B cell (primary cell): ENCODE measurements at regions of chr12 and their contacts with region 1.

Region 1: DNA sequence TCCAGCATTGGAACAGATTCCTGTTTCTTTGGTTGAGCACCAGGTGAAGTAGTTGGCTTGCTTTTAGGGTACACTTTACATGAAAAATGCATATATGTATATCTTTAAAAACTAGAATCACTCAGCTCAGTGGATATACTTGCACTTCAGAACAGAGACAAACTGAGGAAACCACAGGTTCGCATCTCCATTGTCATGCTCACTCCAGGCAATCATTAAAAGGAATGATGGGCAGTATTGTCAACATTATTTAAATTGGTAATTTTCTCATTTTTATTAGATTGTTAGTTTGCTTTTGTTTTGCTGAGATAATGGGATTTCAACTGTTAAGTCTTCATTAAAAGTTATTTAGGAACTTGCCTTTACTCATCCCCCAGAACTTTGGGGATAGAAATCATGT is 71.0 kb upstream of the NELL2 start:
- DNase-seq: no peak
- ATAC-seq: no peak
- H3K4me3 ChIP-seq: no peak overlapping the region
- H3K4me3 Mint-ChIP-seq: no peak overlapping the region
- H3K27ac ChIP-seq: no peak overlapping the region
- H3K27ac Mint-ChIP-seq: no peak overlapping the region
- H3K4me1 ChIP-seq: no peaks in the 10 kb centered on the region
- H3K4me1 Mint-ChIP-seq: peaks cover 4% of the 10 kb centered on the region
- H3K27me3 ChIP-seq: no peaks in the 10 kb centered on the region
- H3K27me3 Mint-ChIP-seq: peaks cover 9% of the 10 kb centered on the region
- CTCF ChIP-seq: no peak

Region 2: GRCh38 chr12:44015335-44015941 is 931.7 kb before region 1 on chr12:
- CTCF ChIA-PET with region 1: interaction called, 18 read pairs
- POLR2A ChIA-PET with region 1: no interaction called
- intact Hi-C with region 1: no loop called
- DNase-seq: peak; percentile 48
- ATAC-seq: peak; percentile 28
- H3K4me3 ChIP-seq: no peak overlapping the region
- H3K4me3 Mint-ChIP-seq: no peak overlapping the region
- H3K27ac ChIP-seq: no peak overlapping the region
- H3K27ac Mint-ChIP-seq: no peak overlapping the region
- H3K4me1 ChIP-seq: no peaks in the 10 kb centered on the region
- H3K4me1 Mint-ChIP-seq: peaks cover 1% of the 10 kb centered on the region
- H3K27me3 ChIP-seq: no peaks in the 10 kb centered on the region
- H3K27me3 Mint-ChIP-seq: no peaks in the 10 kb centered on the region
- CTCF ChIP-seq: peak; percentile 76

Region 3: DNA sequence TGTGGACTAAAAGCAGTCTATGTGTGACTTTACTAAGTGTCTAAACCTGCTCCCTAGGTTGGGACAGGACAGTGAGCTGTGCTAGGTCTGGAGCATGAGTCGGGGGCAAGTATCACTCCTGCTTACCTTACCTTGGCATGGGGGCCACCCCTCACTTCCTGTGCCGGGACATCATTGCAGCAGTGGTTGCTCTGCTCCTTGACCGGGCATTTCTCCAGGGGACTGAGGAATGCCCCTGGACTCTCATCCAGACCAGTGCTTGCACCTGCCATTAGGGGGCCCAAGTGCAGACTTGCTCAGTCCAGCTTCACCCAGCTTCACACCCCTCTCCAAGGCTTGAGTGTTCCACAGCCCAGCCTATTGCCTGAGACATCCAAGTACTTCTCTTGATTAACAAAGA is 13.7 kb after region 1 on chr12:
- CTCF ChIA-PET with region 1: interaction called, 19 read pairs
- POLR2A ChIA-PET with region 1: no interaction called
- intact Hi-C with region 1: no loop called
- DNase-seq: no peak
- ATAC-seq: no peak
- H3K4me3 ChIP-seq: no peak overlapping the region
- H3K4me3 Mint-ChIP-seq: no peak overlapping the region
- H3K27ac ChIP-seq: no peak overlapping the region
- H3K27ac Mint-ChIP-seq: no peak overlapping the region
- H3K4me1 ChIP-seq: no peaks in the 10 kb centered on the region
- H3K4me1 Mint-ChIP-seq: no peaks in the 10 kb centered on the region
- H3K27me3 ChIP-seq: no peaks in the 10 kb centered on the region
- H3K27me3 Mint-ChIP-seq: no peaks in the 10 kb centered on the region
- CTCF ChIP-seq: no peak